GM12878 (cell line): ENCODE measurements at regions of chr14 and their contacts with region 1.

Region 1: GRCh38 chr14:89430391-89431236 is 13.6 kb upstream of the FOXN3 start:
- DNase-seq: peak; percentile 99
- ATAC-seq: peak; percentile 95
- H3K4me3 ChIP-seq: peak overlapping the region; percentile 29
- H3K27ac ChIP-seq: peak overlapping the region; percentile 97
- H3K4me1 ChIP-seq: peaks cover 49% of the 10 kb centered on the region
- H3K27me3 ChIP-seq: no peaks in the 10 kb centered on the region
- CTCF ChIP-seq: no peak
- EP300 ChIP-seq: peak; percentile 90 to 94
- POLR2A ChIP-seq: peak; percentile 37; the same call in 1 of the 2 replicates
- RAD21 ChIP-seq: peak; percentile 27; the same call in 1 of the 2 replicates

Region 2: GRCh38 chr14:89040460-89041259 is 390.0 kb before region 1 on chr14:
- CTCF ChIA-PET with region 1: interaction called, 3 read pairs
- POLR2A ChIA-PET with region 1: no interaction called
- RAD21 ChIA-PET with region 1: no interaction called
- SMC1A ChIA-PET with region 1: no interaction called
- in situ Hi-C with region 1: loop called (anchors 25 kb)
- intact Hi-C with region 1: no loop called
- DNase-seq: peak; percentile 21
- ATAC-seq: peak; percentile 95
- H3K4me3 ChIP-seq: peak overlapping the region; percentile 59; the same call in 1 of the 2 replicates
- H3K27ac ChIP-seq: no peak overlapping the region
- H3K4me1 ChIP-seq: peaks cover 6% of the 10 kb centered on the region
- H3K27me3 ChIP-seq: no peaks in the 10 kb centered on the region
- CTCF ChIP-seq: peak; percentile 88 to 96 (median 95); a peak in 5 of 6 replicates
- EP300 ChIP-seq: no peak
- POLR2A ChIP-seq: no peak
- RAD21 ChIP-seq: peak; percentile 97

Region 3: GRCh38 chr14:89365061-89365801 is 65.4 kb before region 1 on chr14:
- CTCF ChIA-PET with region 1: interaction called, 3 read pairs
- POLR2A ChIA-PET with region 1: interaction called, 4 read pairs
- RAD21 ChIA-PET with region 1: interaction called, 25 read pairs
- SMC1A ChIA-PET with region 1: interaction called, 23 read pairs
- in situ Hi-C with region 1: no loop called
- intact Hi-C with region 1: loop called (anchors 5 kb)
- DNase-seq: peak; percentile 81
- ATAC-seq: peak; percentile 96
- H3K4me3 ChIP-seq: peak overlapping the region; percentile 59
- H3K27ac ChIP-seq: peak overlapping the region; percentile 97
- H3K4me1 ChIP-seq: peaks cover 31% of the 10 kb centered on the region
- H3K27me3 ChIP-seq: no peaks in the 10 kb centered on the region
- CTCF ChIP-seq: no peak
- EP300 ChIP-seq: peak; percentile 82 to 90
- POLR2A ChIP-seq: peak; percentile 51; the same call in 1 of the 2 replicates
- RAD21 ChIP-seq: no peak; the same call in 1 of the 2 replicates

Region 4: GRCh38 chr14:89444044-89444443 is 13.4 kb after region 1 on chr14:
- CTCF ChIA-PET with region 1: interaction called, 6 read pairs
- POLR2A ChIA-PET with region 1: interaction called, 7 read pairs
- RAD21 ChIA-PET with region 1: interaction called, 12 read pairs
- SMC1A ChIA-PET with region 1: interaction called, 13 read pairs
- in situ Hi-C with region 1: no loop called
- intact Hi-C with region 1: no loop called
- DNase-seq: no peak
- ATAC-seq: peak; percentile 68
- H3K4me3 ChIP-seq: no peak overlapping the region
- H3K27ac ChIP-seq: peak overlapping the region; percentile 62
- H3K4me1 ChIP-seq: peaks cover 24% of the 10 kb centered on the region
- H3K27me3 ChIP-seq: no peaks in the 10 kb centered on the region
- CTCF ChIP-seq: no peak
- EP300 ChIP-seq: 0 out of 4 replicates have a peak, but pooled peaks of 1 of the 2 experiments have one; percentile 28
- POLR2A ChIP-seq: no peak
- RAD21 ChIP-seq: no peak

Region 5: DNA sequence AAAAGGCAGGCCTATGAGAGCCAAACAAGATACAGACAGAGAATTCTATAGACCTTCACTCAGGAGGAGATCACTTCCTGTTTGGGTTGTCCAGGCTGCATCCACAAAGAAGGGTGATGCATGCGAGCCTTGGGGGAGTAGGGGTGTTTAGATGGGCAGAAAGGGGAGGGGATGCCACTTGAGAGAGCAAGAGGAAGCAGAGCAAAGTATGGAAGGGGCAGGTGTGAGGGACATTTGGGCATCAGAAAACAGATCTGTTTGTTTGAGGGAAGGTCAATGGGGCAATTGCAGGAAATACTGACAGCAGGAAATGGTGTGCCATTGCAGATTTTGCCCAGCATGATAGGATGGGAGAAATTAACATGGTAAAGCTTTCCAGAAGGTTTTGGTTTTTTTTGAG is 132.9 kb after region 1 on chr14:
- CTCF ChIA-PET with region 1: no interaction called
- POLR2A ChIA-PET with region 1: no interaction called
- RAD21 ChIA-PET with region 1: no interaction called
- SMC1A ChIA-PET with region 1: no interaction called
- in situ Hi-C with region 1: no loop called
- intact Hi-C with region 1: no loop called
- DNase-seq: no peak
- ATAC-seq: no peak
- H3K4me3 ChIP-seq: no peak overlapping the region
- H3K27ac ChIP-seq: no peak overlapping the region
- H3K4me1 ChIP-seq: no peaks in the 10 kb centered on the region
- H3K27me3 ChIP-seq: no peaks in the 10 kb centered on the region
- CTCF ChIP-seq: no peak
- EP300 ChIP-seq: no peak
- POLR2A ChIP-seq: no peak
- RAD21 ChIP-seq: no peak

Region 6: DNA sequence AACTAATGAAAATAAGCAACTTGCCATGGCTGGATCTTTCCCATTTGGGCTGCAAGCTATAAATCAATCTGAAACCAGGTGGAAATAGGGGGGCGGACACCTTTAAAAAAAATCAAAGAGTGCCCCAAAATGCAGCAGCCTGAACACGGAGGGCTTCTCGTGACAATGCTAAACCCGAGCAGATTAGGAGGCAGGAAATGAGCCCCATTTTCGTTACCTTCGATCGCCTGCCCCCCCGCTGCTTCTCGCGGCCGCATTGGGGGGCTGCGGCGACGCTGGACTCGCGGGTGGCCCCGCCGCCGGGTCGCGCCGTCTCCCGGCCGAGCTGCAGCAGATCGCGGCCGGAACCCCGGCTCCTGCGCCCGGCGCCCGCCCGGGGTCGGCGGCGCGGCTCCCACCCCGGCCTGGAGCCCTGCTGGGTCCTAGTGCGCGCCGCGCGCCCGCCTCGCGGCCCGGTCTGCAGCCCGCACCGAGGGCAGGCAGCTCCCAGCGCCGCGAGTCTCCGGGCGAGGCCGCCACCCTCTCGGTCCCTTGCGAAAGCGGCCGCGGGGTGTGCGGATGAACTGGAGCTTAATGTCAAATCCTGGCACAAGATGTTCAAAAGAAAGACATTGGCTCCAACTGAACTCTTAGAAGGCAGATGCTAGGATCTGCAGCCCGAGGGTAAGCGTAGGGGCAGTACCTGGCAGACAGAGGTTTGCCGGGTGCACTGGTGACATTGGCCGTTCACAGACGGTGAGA is 188.4 kb after region 1 on chr14:
- CTCF ChIA-PET with region 1: no interaction called
- POLR2A ChIA-PET with region 1: no interaction called
- RAD21 ChIA-PET with region 1: interaction called, 3 read pairs
- SMC1A ChIA-PET with region 1: no interaction called
- in situ Hi-C with region 1: loop called (anchors 5 kb)
- intact Hi-C with region 1: loop called (anchors 2 kb)
- DNase-seq: no peak
- ATAC-seq: peak; percentile 88
- H3K4me3 ChIP-seq: peak overlapping the region; percentile 86
- H3K27ac ChIP-seq: peak overlapping the region; percentile 74
- H3K4me1 ChIP-seq: peaks cover 36% of the 10 kb centered on the region
- H3K27me3 ChIP-seq: no peaks in the 10 kb centered on the region
- CTCF ChIP-seq: no peak
- EP300 ChIP-seq: no peak
- POLR2A ChIP-seq: peak; percentile 77
- RAD21 ChIP-seq: peak; percentile 17; the same call in 1 of the 2 replicates

Region 7: GRCh38 chr14:89757313-89757939 is 326.8 kb after region 1 on chr14:
- CTCF ChIA-PET with region 1: no interaction called
- POLR2A ChIA-PET with region 1: no interaction called
- RAD21 ChIA-PET with region 1: no interaction called
- SMC1A ChIA-PET with region 1: no interaction called
- in situ Hi-C with region 1: no loop called
- intact Hi-C with region 1: no loop called
- DNase-seq: no peak
- ATAC-seq: no peak; the same call in 2 of the 3 replicates
- H3K4me3 ChIP-seq: no peak overlapping the region
- H3K27ac ChIP-seq: no peak overlapping the region
- H3K4me1 ChIP-seq: no peaks in the 10 kb centered on the region
- H3K27me3 ChIP-seq: no peaks in the 10 kb centered on the region
- CTCF ChIP-seq: no peak
- EP300 ChIP-seq: no peak
- POLR2A ChIP-seq: no peak
- RAD21 ChIP-seq: no peak

Region 8: DNA sequence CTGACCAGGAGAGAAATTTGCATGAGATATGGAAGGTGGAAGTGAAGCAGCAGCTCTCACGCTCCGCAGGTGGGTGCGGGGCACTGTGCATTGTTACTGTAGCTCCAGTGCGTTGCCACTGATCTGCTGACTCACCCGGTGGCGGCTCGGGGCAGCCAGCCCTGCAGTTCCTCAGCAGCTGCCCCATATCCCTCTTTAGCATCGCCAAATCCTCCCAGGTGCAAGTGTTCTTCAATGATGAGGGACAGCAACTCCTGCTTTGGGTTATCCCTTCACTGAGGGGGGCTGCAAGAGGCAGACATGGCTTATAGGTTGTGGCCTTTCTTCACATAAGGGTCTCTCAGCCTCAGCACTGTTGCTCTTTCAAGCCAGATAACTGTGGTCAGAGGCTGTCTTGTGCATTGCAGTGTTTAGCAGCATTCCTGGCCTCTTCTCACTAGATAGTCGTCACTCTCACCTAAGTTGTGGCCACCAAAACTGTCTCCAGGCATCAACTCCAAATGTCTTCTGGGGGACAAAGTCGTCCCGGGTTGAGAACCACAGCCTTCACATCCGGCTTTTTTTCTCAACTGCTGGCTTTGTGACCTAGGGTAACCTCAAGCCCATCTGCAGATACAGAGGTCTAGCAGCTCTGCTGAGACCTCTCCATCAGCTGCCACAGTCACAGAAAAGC is 343.2 kb after region 1 on chr14:
- CTCF ChIA-PET with region 1: no interaction called
- POLR2A ChIA-PET with region 1: no interaction called
- RAD21 ChIA-PET with region 1: no interaction called
- SMC1A ChIA-PET with region 1: no interaction called
- in situ Hi-C with region 1: loop called (anchors 5 kb)
- intact Hi-C with region 1: no loop called
- DNase-seq: peak; percentile 56
- ATAC-seq: peak; percentile 92
- H3K4me3 ChIP-seq: peak overlapping the region; percentile 34; the same call in 1 of the 2 replicates
- H3K27ac ChIP-seq: peak overlapping the region; percentile 85
- H3K4me1 ChIP-seq: peaks cover 24% of the 10 kb centered on the region
- H3K27me3 ChIP-seq: no peaks in the 10 kb centered on the region
- CTCF ChIP-seq: no peak
- EP300 ChIP-seq: peak in 1 of 2 experiments; percentile 52; a peak in 1 of 4 replicates
- POLR2A ChIP-seq: no peak
- RAD21 ChIP-seq: no peak